ENCODE measurements at regions of chr3 and their contacts with region 1.

Region 1: GRCh38 chr3:182683453-182683852 is 109.9 kb upstream of the ATP11B start:
- DNase-seq: peak; percentile 34 to 66
- ATAC-seq: peak; percentile 69

Region 2: DNA sequence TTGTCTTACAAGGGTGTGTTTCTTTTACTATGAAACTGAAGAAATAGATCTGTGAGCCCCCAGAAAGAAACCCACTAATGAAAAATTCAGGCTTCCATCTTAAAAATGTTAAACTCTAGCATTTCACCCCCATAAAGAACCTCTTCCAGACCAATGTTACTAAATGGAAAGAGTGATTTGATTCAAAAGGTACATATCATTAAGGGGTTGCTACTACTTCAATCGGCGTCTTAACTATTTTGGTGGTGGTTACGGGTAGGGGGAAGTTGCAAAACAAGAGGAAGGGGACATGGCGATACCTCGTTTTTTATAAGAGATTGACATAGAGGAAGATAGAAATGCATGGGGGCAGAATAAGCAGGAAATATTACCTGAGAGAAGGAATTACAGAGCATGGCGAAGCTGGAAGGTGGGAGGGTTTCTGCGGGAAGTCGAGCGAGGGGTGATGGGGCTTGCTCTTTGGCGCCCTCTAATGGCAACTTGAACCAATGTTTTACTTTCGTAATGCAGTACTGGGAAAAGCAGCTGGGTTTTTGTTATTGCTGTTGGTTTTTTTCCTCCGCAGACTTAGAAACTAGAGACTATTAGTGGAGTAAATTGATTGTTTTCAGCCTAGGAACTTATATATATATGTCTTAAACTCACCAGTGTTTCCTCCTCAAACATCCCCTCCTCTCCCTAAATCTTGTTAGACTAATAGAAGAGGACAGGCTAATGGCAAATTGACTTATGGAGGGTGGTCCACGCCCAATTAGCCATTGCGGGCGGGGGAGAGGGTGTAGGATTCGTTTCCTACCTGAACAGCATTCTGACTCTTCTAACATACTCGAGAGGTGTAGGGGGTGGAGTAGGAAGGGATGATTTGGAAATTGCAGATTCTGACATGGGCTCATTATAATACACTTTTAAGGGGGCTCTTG is 983.0 kb before region 1 on chr3:
- intact Hi-C with region 1: loop called in 1 of 2 experiments (anchors 10 kb)
- DNase-seq: peak in 1 of 2 donors; percentile 62
- ATAC-seq: peak; percentile 74

Region 3: DNA sequence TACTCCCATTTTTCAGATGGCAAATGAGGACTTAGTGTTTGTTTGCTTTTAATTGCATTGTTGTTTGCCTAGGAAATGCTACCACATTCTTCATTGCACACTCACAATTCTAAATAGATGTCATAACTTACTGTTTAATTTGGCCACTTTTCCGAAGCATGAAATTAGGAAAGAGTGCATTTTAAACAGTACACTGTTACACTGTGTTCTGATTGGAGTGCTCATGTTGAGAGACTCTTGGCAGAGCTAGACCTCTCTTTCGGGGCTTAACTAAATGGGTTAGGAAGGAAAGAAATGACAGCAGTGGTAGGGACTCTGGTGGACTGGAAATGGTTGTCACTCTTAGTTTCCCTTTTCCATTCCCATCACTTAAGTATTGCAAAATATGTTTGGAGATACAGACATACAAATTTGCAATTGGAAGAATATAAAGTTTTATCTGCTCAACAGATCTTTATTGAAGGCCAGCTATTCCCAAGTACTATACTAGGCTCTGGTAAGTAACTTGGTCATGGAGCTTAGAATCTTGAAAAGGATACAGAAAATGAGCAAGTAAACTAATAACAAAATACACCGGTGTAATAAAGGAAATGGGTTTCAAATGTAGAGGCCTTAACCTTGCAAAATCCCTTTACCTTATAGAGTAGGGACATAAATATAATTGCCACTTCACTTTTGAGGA is 206.6 kb after region 1 on chr3:
- intact Hi-C with region 1: no loop called
- DNase-seq: no peak
- ATAC-seq: no peak

Measured in left colon (tissue), 2 donors.